PC-3 (cell line): ENCODE measurements at regions of chr12 and their contacts with region 1.

Region 1: DNA sequence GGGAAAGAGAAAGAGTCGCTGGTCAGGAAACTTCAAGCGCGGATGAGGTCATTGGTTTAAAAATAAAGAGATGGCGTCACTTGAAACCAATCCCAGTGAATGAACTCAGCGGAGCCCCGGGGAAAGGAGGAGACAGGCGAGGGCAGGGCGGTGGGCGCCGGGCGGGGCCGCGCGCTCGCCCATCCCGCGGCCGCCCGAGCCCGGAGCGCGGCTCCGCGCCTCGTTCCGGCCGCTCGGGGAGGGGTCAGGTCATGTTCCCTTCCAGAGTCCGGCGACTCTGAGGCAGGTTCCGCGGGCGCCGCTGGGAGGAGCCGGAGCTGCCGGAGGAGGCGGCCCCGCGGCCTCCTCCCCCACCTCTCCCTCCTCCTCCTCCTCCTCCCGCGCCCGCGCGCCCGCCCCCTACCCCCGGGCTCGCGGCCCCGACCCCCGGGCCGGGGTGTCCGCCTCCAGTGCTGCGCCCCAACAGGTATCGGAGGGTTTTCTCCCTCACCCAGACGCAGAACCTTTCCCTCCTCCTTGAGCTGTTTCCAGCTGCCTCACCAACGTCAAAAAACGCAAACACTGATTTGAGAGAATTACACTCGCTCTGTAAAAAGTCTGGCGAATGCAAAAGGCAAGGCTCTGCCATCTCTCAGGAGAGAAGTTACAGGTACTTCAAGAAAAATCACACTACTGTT is at the start of gene DUSP16:
- DNase-seq: peak; percentile 87
- ATAC-seq: peak; percentile 86
- H3K4me3 ChIP-seq: peak within 1 kb of the TSS; percentile 90
- H3K27ac ChIP-seq: peak within 1 kb of the TSS; percentile 98
- H3K4me1 ChIP-seq: peaks cover 23% of the 10 kb centered on the region
- H3K27me3 ChIP-seq: no peaks in the 10 kb centered on the region
- CTCF ChIP-seq: no peak
- total RNA-seq, gene DUSP16: 4.4 and 6.7 TPM in 2 replicates

Region 2: GRCh38 chr12:12356886-12357718 is 205.6 kb before region 1 on chr12 and contains the start of gene BORCS5:
- CTCF ChIA-PET with region 1: no interaction called
- POLR2A ChIA-PET with region 1: no interaction called
- intact Hi-C with region 1: no loop called
- DNase-seq: peak; percentile 95
- ATAC-seq: peak; percentile 90
- H3K4me3 ChIP-seq: peak within 1 kb of the TSS; percentile 91
- H3K27ac ChIP-seq: peak within 1 kb of the TSS; percentile 86
- H3K4me1 ChIP-seq: peaks cover 11% of the 10 kb centered on the region; the same call in 1 of the 2 replicates
- H3K27me3 ChIP-seq: no peaks in the 10 kb centered on the region
- CTCF ChIP-seq: 0 out of 2 replicates have a peak, but pooled peaks have one; percentile 19
- total RNA-seq, gene BORCS5: 2.3 and 7.7 TPM in 2 replicates

Region 3: GRCh38 chr12:12376646-12377448 is 185.9 kb before region 1 on chr12:
- CTCF ChIA-PET with region 1: no interaction called
- POLR2A ChIA-PET with region 1: no interaction called
- intact Hi-C with region 1: loop called (anchors 1 kb)
- DNase-seq: peak; percentile 81
- ATAC-seq: peak; percentile 66; the same call in 1 of the 2 replicates
- H3K4me3 ChIP-seq: no peak overlapping the region
- H3K27ac ChIP-seq: peak overlapping the region; percentile 23
- H3K4me1 ChIP-seq: no peaks in the 10 kb centered on the region
- H3K27me3 ChIP-seq: no peaks in the 10 kb centered on the region
- CTCF ChIP-seq: peak; percentile 79

Region 4: DNA sequence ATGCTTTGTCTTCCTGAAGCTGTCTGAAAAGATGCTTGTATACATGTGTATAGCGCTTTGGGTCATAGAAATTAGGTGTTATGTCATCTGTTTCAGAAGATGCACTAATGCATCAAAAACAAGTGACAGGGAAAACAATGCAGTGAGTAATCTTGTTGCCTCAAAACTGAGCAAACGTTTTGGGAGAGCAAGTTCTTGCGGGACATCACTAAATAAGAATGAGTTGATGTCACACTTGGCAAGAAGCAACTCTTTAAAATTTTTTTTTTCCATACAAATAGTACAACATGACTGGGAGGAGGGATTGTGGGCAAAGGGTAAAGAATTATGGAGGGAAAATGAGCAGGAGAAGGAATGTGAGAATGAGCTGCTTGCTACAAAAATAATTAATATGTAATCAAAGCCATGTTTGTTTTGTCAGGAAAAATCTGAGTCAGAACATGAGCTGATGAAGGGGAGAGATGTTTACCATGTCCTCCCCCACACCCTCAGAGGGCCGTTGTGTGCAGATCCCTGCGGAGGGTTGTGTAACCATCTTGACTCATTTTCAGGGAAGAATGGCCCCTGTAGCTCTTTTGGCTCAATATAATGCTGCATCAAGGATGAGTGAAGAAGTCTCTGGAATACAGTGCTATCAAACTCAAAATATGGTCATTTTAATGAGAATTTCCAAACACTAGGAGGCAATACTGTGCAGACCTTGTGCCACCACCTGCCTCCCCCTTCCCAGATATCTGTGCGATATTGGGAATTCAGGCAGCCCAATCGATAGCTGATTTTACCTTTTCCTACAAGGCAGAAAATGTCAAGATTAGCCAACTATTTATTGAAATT is 164.5 kb before region 1 on chr12:
- CTCF ChIA-PET with region 1: no interaction called
- POLR2A ChIA-PET with region 1: interaction called, 3 read pairs
- intact Hi-C with region 1: loop called (anchors 5 kb)
- DNase-seq: peak; percentile 92
- ATAC-seq: peak; percentile 98
- H3K4me3 ChIP-seq: no peak overlapping the region
- H3K27ac ChIP-seq: peak overlapping the region; percentile 81
- H3K4me1 ChIP-seq: peaks cover 22% of the 10 kb centered on the region
- H3K27me3 ChIP-seq: no peaks in the 10 kb centered on the region
- CTCF ChIP-seq: peak; percentile 45

Region 5: DNA sequence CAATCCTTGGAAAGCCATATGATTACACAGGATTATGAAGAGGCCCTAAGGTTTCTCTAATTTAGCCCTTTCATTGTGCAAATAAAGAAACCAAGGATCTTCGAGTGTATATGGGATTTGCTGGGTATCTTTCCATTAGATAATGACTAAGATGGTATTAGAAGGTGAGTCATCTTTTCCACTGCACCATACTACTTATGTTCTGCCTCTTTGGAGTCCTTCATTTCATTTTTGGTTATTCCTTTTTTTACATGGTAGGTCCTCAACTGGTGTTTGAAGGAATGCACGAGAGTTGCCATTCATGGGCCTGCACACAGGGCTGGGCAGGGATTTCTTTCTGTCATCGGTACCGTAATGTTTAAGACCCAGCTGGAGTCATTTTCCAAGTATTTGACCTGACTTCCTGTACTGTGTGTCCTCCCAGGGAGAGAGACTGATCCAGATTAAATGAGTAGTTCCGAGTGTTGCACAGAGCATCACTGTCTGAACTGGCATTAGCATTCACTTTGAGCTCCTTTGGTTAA is 120.1 kb before region 1 on chr12:
- CTCF ChIA-PET with region 1: no interaction called
- POLR2A ChIA-PET with region 1: no interaction called
- intact Hi-C with region 1: loop called (anchors 10 kb)
- DNase-seq: peak; percentile 58
- ATAC-seq: peak; percentile 21; the same call in 1 of the 2 replicates
- H3K4me3 ChIP-seq: no peak overlapping the region
- H3K27ac ChIP-seq: peak overlapping the region; percentile 68
- H3K4me1 ChIP-seq: peaks cover 35% of the 10 kb centered on the region
- H3K27me3 ChIP-seq: no peaks in the 10 kb centered on the region
- CTCF ChIP-seq: no peak

Region 6: DNA sequence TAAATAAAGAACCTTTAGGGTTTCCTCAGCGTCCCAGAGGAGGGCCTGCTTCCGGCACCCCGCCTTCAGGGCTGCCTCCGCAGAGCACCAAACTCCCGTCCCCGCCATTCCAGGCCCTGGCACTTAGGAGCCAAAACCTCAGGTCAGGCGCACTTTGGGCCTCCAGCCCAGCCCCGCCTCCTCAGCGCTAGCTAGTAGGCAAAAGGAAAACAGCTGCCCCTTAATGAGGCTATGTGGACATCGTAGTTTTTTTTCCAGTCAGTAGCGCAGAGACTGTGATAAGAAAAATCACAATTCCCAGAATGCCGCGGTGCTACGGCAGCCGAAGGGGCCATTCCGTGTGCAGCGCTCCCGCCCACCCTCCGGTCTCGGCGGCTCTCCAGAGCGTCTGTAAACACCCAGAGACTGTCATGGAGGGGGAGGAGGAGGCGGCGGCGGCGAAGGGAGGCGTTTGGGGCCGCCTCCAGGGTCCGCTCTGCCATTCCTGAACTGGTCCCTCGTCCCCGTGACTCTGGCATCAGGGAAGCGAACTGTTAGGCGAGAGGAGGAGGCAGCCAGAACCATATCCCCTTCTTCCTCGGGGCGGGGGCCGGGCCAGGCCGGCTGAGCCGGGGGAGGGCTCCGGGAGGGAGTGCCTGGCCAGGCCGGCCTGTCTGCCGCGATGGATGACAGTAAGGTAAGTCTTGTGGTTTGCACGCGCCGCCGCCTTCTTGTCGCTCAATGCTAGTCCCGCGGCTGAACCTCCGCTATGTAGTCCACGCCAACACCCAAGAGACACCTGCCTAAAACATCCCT is 49.0 kb after region 1 on chr12 and contains the start of gene CREBL2:
- CTCF ChIA-PET with region 1: no interaction called
- POLR2A ChIA-PET with region 1: no interaction called
- intact Hi-C with region 1: loop called (anchors 5 kb)
- DNase-seq: peak; percentile 87
- ATAC-seq: peak; percentile 68
- H3K4me3 ChIP-seq: peak within 1 kb of the TSS; percentile 86
- H3K27ac ChIP-seq: peak within 1 kb of the TSS; percentile 95
- H3K4me1 ChIP-seq: peaks cover 26% of the 10 kb centered on the region
- H3K27me3 ChIP-seq: no peaks in the 10 kb centered on the region
- CTCF ChIP-seq: no peak
- total RNA-seq, gene CREBL2: 11.7 and 14.2 TPM in 2 replicates

Region 7: DNA sequence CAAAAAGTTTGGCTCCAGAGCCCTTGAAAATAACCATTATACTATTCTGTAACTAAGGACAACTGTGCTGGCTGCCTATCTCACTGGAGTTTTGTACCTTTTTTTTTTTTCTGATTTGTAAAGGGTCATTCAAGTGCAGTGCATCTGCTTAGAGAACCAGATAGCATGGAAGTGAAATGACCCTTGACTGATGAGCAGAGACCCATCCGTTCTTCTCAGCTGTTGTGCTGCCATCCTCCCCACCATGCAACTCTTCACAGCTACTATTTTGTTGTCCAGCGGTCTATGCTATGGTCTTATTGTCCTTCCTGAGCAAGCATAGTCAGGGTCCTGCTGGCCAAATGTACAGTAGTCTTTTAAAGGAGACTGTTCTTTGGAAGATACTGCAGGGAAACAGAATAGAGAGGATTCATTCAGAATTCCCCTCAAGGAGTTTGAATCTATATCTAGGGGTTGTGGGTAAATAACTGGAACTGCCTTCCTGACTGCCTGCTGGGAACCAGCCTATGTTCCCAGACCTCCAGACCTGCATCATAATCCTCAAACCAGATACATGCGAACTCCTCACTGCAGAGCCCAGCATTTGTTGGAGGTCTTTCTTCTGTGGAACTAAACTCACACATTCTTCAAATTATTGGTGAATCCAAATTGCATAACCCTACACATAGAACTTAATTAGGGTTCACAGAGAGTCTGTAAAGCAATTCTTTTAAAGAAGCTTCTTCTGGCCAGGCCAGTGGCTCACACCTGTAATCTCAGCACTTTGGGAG is 92.2 kb after region 1 on chr12:
- CTCF ChIA-PET with region 1: no interaction called
- POLR2A ChIA-PET with region 1: no interaction called
- intact Hi-C with region 1: loop called (anchors 5 kb)
- DNase-seq: no peak
- ATAC-seq: no peak
- H3K4me3 ChIP-seq: no peak overlapping the region
- H3K27ac ChIP-seq: no peak overlapping the region
- H3K4me1 ChIP-seq: no peaks in the 10 kb centered on the region
- H3K27me3 ChIP-seq: no peaks in the 10 kb centered on the region
- CTCF ChIP-seq: no peak

Region 8: GRCh38 chr12:12704593-12705230 is 142.0 kb after region 1 on chr12:
- CTCF ChIA-PET with region 1: no interaction called
- POLR2A ChIA-PET with region 1: no interaction called
- intact Hi-C with region 1: loop called (anchors 1 kb)
- DNase-seq: peak; percentile 89
- ATAC-seq: peak; percentile 97
- H3K4me3 ChIP-seq: no peak overlapping the region
- H3K27ac ChIP-seq: peak overlapping the region; percentile 17; the same call in 1 of the 2 replicates
- H3K4me1 ChIP-seq: peaks cover 5% of the 10 kb centered on the region
- H3K27me3 ChIP-seq: no peaks in the 10 kb centered on the region
- CTCF ChIP-seq: peak; percentile 97

Region 9: GRCh38 chr12:13004361-13004760 is 441.6 kb after region 1 on chr12:
- CTCF ChIA-PET with region 1: no interaction called
- POLR2A ChIA-PET with region 1: no interaction called
- intact Hi-C with region 1: no loop called
- DNase-seq: no peak
- ATAC-seq: no peak
- H3K4me3 ChIP-seq: no peak overlapping the region
- H3K27ac ChIP-seq: no peak overlapping the region
- H3K4me1 ChIP-seq: peaks cover 6% of the 10 kb centered on the region
- H3K27me3 ChIP-seq: no peaks in the 10 kb centered on the region
- CTCF ChIP-seq: no peak